ENCODE measurements at regions of chr13 and their contacts with region 1.

Region 1: DNA sequence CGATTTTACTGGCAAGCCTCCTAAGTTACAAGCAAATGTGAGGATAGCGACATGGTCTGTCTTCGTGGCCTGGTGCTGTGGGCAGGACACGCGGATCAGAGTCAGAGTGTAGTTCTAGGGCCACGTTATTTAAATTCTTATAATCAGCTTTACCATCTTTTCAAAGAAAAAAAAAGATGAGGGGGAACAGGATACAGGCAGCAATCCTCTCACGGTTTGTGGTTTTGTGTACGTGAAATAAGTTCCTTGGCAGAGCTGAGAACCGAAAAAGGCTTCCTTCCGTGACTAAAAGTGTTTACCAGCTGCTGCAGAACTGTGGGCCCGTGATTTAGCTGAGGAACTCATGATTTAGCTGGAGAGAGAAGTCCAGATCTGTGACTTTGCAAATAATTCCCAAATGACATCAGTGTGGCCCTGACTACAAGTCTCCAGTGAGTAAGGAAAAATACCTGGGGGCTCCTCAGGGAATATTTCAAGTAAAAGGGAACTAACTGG is 27.2 kb downstream of the RCBTB2 start:
- DNase-seq: peak in 1 of 2 donors; percentile 91
- ATAC-seq: peak; percentile 17 to 65 (median 50)
- H3K4me3 ChIP-seq: no peak overlapping the region
- H3K4me3 Mint-ChIP-seq: peak overlapping the region; percentile 85
- H3K27ac ChIP-seq: peak overlapping the region; percentile 80
- H3K27ac Mint-ChIP-seq: peak overlapping the region; percentile 91 to 97
- H3K4me1 ChIP-seq: peaks cover 48% of the 10 kb centered on the region
- H3K4me1 Mint-ChIP-seq: peaks cover 57 to 75% of the 10 kb centered on the region in 2 donors
- H3K27me3 ChIP-seq: no peaks in the 10 kb centered on the region
- H3K27me3 Mint-ChIP-seq: no peaks in the 10 kb centered on the region
- CTCF ChIP-seq: no peak

Region 2: GRCh38 chr13:48532506-48533499 is 27.2 kb after region 1 on chr13 and contains the start of gene RCBTB2:
- intact Hi-C with region 1: loop called (anchors 1 kb)
- DNase-seq: peak; percentile 98 to 100
- ATAC-seq: peak; percentile 84 to 95 (median 87)
- H3K4me3 ChIP-seq: peak within 1 kb of the TSS; percentile 84
- H3K4me3 Mint-ChIP-seq: peak within 1 kb of the TSS; percentile 96
- H3K27ac ChIP-seq: peak within 1 kb of the TSS; percentile 96
- H3K27ac Mint-ChIP-seq: peak within 1 kb of the TSS; percentile 96 to 98
- H3K4me1 ChIP-seq: peaks cover 16% of the 10 kb centered on the region
- H3K4me1 Mint-ChIP-seq: peaks cover 45 to 50% of the 10 kb centered on the region in 2 donors
- H3K27me3 ChIP-seq: no peaks in the 10 kb centered on the region
- H3K27me3 Mint-ChIP-seq: no peaks in the 10 kb centered on the region
- CTCF ChIP-seq: no peak
- total RNA-seq, gene RCBTB2: 21.9 to 27.1 (median 24.2) TPM

Measured in natural killer cell (primary cell).